ENCODE measurements at regions of chr2 and their contacts with region 1.

Region 1: DNA sequence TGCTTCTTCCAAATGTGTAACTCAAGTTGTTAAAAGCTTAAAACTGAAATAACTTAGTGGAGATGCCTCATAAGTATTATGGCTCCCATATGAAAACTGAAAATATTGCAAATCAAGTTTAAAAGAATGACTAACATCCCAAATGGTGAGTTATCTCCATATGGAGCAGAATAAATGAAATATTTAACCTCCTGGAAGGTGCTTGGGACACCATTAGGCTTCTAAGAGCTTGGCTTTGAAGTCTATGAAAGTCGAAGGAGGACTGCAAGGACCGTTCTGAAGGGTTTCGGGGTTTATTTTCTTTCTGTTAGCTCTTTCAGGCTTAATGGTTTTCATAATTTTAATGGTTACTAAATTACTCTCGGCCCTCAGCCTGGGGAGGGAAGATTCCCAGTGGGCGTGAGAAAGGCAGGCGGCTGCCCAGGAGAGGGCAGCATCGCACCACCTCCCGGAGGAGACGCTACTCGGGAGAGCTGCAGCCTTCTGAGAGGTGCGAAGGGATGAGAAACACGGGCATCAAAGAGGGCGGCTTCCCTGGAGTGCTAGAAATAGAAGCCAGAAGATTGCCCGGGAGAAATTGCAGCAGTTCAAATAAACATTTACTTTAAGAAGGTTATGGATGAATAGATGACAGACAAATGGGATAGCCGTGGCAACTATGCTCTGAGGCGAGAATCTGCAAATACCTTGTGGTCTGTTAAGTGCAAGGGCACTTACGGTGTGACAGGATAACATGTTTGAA is 43.1 kb downstream of the MAP3K19 start:
- DNase-seq: peak; percentile 67
- H3K4me3 Mint-ChIP-seq: no peak overlapping the region
- H3K27ac Mint-ChIP-seq: no peak overlapping the region
- H3K4me1 Mint-ChIP-seq: peaks cover 7% of the 10 kb centered on the region
- H3K27me3 Mint-ChIP-seq: peaks cover 17% of the 10 kb centered on the region

Region 2: GRCh38 chr2:135709992-135710391 is 705.8 kb after region 1 on chr2:
- CTCF ChIA-PET with region 1: interaction called, 16 read pairs
- POLR2A ChIA-PET with region 1: no interaction called
- DNase-seq: peak; percentile 77
- H3K4me3 Mint-ChIP-seq: no peak overlapping the region
- H3K27ac Mint-ChIP-seq: no peak overlapping the region
- H3K4me1 Mint-ChIP-seq: peaks cover 2% of the 10 kb centered on the region
- H3K27me3 Mint-ChIP-seq: no peaks in the 10 kb centered on the region